ENCODE measurements at regions of chr7 and their contacts with region 1.

Region 1: DNA sequence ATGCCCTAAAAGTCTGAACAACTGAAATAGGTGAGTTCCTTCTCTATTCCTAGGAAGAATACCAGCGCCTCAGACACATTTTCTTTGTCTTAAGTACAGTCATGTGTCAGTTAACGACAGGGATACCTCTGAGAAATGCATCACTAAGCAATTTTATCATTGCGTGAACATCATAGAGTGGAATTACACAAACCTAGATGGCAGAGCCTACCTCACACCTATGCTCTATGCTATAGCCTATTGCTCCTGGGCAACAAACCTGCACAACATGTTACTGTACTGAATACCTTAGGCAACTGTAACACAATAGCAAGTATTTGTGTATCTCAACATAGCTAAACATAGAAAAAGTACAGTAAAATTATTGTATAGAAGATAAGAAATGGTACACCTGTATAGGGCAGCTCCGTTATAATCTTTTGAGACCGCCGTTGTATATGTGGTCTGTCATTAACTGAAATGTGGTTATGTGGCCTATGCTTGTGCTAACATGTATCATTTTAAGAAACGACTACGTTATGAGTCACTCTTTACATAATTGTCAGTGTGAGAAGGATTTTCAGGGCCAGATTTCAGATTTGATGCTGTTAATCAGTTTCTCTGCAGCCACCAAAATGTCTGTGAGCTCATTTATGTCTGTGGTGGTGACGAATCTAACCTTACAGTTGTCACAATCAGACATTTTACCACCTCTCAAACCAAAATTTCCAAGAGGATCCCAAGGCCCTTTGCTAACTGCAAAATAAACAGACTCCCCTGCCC is 66.1 kb upstream of the STK17A start:
- DNase-seq: peak; percentile 29
- ATAC-seq: peak; percentile 84
- H3K4me3 Mint-ChIP-seq: no peak overlapping the region
- H3K27ac Mint-ChIP-seq: peak overlapping the region; percentile 16
- H3K4me1 Mint-ChIP-seq: peaks cover 6% of the 10 kb centered on the region
- H3K27me3 Mint-ChIP-seq: peaks cover 8% of the 10 kb centered on the region
- CTCF ChIP-seq: no peak

Region 2: GRCh38 chr7:43528576-43529354 is 12.0 kb after region 1 on chr7:
- CTCF ChIA-PET with region 1: interaction called, 11 read pairs
- POLR2A ChIA-PET with region 1: interaction called, 3 read pairs
- intact Hi-C with region 1: no loop called
- DNase-seq: no peak
- ATAC-seq: no peak
- H3K4me3 Mint-ChIP-seq: no peak overlapping the region
- H3K27ac Mint-ChIP-seq: no peak overlapping the region
- H3K4me1 Mint-ChIP-seq: no peaks in the 10 kb centered on the region
- H3K27me3 Mint-ChIP-seq: peaks cover 3% of the 10 kb centered on the region
- CTCF ChIP-seq: no peak

Measured in activated CD8-positive, alpha-beta T cell treated with anti-CD3 and anti-CD28 coated beads for 36 hours (primary cell).